K562 (cell line): ENCODE measurements at regions of chr1 and their contacts with region 1.

Region 1: GRCh38 chr1:220038640-220039039 is 7.7 kb downstream of the EPRS1 start:
- DNase-seq: no peak
- ATAC-seq: peak; percentile 7; the same call in 1 of the 3 replicates
- H3K4me3 ChIP-seq: no peak overlapping the region
- H3K27ac ChIP-seq: no peak overlapping the region
- H3K4me1 ChIP-seq: peaks cover 0 to 8% of the 10 kb centered on the region in 2 experiments; a peak in 2 of 5 replicates
- H3K27me3 ChIP-seq: no peaks in the 10 kb centered on the region
- CTCF ChIP-seq: no peak
- EP300 ChIP-seq: no peak
- POLR2A ChIP-seq: no peak
- RAD21 ChIP-seq: no peak

Region 2: DNA sequence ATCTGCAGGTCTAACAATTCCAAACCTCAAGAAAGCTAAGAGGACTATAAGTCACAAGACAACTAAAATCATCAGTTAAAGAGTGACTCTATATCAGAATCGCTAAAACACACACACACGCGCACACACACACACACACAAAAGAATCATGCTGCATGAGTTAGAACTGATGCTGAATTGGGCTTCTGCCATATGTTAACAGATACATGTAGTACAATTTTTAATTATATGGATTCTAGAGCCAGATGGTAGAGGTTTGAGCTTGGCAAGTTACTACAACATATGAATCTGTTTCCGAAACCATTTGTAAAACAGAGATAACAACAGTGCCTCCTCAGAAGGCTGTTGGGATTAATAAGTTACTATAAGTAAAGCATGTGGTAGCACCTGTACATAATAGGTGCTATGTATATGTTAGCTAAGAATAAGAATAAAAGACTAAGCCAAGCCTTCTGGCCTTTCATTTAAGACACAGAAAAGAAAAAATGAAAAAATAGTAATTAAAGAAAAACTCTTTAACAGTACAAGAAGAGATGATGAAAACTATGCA is 10.2 kb before region 1 on chr1:
- CTCF ChIA-PET with region 1: no interaction called
- POLR2A ChIA-PET with region 1: interaction called, 12 read pairs
- in situ Hi-C with region 1: no loop called
- intact Hi-C with region 1: no loop called
- DNase-seq: no peak
- ATAC-seq: no peak
- H3K4me3 ChIP-seq: no peak overlapping the region
- H3K27ac ChIP-seq: no peak overlapping the region
- H3K4me1 ChIP-seq: no peaks in the 10 kb centered on the region
- H3K27me3 ChIP-seq: no peaks in the 10 kb centered on the region
- CTCF ChIP-seq: no peak
- EP300 ChIP-seq: no peak
- POLR2A ChIP-seq: no peak
- RAD21 ChIP-seq: no peak